K562 (cell line): ENCODE measurements at regions of chr6 and their contacts with region 1.

Region 1: DNA sequence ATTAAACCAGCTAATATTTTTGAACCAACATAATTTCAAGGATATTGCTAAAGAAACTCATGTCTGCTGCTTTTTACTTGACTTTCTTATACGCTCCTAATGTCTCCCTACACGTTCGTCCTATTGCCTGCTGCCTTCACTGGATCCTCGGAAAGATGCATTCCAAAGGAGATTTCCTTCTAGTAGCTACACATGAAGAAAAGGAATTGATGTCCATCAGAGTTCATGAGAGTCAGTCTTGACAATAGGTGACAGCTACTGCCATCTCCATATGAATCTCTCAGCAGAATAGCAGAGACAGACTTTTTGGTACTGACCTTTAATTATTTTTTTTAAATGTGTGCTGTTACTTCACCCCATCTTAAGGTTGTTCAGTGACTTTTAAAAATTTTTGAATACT is 24.2 kb upstream of the COL9A1 start:
- DNase-seq: no peak
- ATAC-seq: no peak
- H3K4me3 ChIP-seq: no peak overlapping the region
- H3K27ac ChIP-seq: no peak overlapping the region
- H3K4me1 ChIP-seq: no peaks in the 10 kb centered on the region; a peak in 1 of 5 replicates
- H3K27me3 ChIP-seq: no peaks in the 10 kb centered on the region
- CTCF ChIP-seq: no peak
- EP300 ChIP-seq: no peak
- POLR2A ChIP-seq: no peak
- RAD21 ChIP-seq: no peak

Region 2: DNA sequence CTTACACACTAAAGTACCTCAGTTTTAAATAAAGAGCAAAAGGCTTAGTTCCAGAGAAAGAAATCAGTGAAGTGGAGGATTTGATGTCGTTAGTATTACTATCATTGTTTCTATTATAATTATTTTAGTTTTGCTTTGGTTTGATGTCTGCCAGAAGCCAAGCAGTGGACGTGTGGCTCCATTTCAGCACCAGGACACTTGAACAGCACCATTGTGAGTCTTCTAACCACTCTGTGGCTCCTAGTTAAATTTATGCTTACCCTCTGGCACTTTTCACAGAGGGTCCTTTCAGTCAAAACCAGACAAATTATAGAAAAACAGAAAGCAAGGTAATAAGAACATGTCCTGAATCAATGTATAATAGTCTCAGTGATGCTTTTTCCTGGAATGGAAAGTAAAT is 27.6 kb before region 1 on chr6:
- CTCF ChIA-PET with region 1: no interaction called
- POLR2A ChIA-PET with region 1: no interaction called
- in situ Hi-C with region 1: no loop called
- intact Hi-C with region 1: no loop called
- DNase-seq: peak in 1 of 4 experiments; percentile 31
- ATAC-seq: peak; percentile 64; the same call in 2 of the 3 replicates
- H3K4me3 ChIP-seq: no peak overlapping the region
- H3K27ac ChIP-seq: no peak overlapping the region
- H3K4me1 ChIP-seq: no peaks in the 10 kb centered on the region
- H3K27me3 ChIP-seq: peaks cover 11 to 12% of the 10 kb centered on the region in 2 experiments; a peak in 3 of 5 replicates
- CTCF ChIP-seq: no peak
- EP300 ChIP-seq: no peak
- POLR2A ChIP-seq: no peak
- RAD21 ChIP-seq: no peak

Region 3: DNA sequence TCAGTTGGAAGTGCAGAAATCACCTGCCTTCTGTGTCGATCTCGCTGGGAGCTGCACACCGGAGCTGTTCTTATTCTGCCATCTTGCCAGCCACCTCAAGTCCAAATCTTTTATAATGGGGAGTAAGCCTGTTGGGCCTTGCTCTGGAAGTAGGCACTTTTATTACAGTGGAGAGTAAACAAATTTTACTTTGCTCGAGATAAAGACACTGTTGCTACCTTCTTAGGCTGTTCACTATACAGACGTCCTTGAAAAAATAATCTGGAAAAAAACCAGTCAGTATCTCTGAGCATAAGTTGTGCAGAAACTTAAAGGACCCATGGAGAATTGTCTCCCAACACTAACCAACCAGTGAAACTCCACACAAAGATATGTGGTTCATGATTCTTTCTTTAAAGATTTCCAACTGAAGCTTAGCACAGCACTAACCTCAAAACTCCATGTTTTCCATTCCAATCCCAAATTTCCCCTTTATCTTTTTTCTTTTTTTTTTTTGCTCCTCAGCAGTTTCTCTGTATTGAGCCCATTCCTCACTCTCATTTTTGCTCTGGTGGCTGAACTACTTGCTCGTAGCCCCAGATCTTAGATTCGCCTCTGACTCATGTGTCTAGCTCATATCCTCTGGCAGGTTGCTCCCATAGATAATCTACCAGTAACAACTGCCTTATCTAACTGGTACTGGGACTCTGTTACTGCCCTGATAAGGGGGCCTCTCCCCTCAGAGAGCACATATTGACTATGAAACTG is 10.1 kb after region 1 on chr6:
- CTCF ChIA-PET with region 1: no interaction called
- POLR2A ChIA-PET with region 1: interaction called, 15 read pairs
- in situ Hi-C with region 1: no loop called
- intact Hi-C with region 1: no loop called
- DNase-seq: peak; percentile 93 to 97 (median 95)
- ATAC-seq: peak; percentile 98
- H3K4me3 ChIP-seq: no peak overlapping the region
- H3K27ac ChIP-seq: peak overlapping the region; percentile 56
- H3K4me1 ChIP-seq: peaks cover 8 to 13% of the 10 kb centered on the region in 2 experiments
- H3K27me3 ChIP-seq: no peaks in the 10 kb centered on the region
- CTCF ChIP-seq: 0 out of 6 replicates have a peak, but pooled peaks of 1 of the 3 experiments have one; percentile 1
- EP300 ChIP-seq: peak; percentile 100
- POLR2A ChIP-seq: no peak
- RAD21 ChIP-seq: no peak